ENCODE measurements at regions of chr2 and their contacts with region 1.

Region 1: GRCh38 chr2:38394903-38395341 is 17.8 kb upstream of the ATL2 start:
- DNase-seq: no peak
- ATAC-seq: no peak
- H3K4me3 ChIP-seq: no peak overlapping the region
- H3K27ac ChIP-seq: no peak overlapping the region
- H3K4me1 ChIP-seq: no peaks in the 10 kb centered on the region
- H3K27me3 ChIP-seq: no peaks in the 10 kb centered on the region

Region 2: DNA sequence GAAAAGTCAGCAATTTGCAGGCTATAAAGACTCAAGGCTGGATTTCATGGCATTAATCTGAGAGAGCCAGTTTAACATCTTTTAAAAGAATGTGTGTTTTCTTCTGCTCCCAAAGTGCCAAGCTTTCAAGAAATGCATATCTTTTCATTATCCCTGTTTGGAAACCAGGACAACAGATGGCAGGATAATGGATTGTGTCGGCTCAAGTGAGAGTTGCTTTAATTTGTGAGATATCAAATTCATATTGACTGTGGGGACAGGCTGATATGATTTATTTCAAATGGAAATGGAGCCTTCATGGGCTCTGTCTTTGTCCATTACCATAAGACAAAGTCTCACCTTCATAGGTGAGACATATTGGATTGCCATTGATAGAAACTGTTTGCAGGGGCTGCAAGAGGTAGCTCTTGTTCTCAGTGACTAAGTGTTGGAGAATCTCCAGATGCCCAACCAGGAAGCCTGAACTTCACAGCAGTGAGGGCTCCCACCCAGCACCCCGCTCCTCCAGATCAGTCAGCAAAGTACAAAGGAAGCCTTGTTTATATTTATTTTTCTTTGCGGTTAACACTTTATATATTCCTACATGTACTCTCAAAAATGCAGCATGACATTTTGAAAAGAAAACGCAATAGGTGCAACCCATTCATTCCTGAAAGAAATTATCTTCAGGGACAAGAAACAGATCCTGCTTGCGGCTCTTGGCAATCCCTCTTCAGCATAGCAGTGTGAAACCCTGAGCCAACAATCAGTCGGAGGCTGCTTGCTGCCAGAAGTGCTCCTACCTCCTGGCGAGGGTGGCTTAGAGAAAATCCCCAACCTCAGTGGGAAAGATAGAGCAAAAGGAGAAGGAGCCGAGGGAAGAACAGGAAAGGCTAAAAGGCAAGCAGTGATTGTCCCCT is 48.0 kb after region 1 on chr2:
- intact Hi-C with region 1: loop called in 1 of 2 experiments (anchors 10 kb)
- DNase-seq: no peak
- ATAC-seq: peak; percentile 24
- H3K4me3 ChIP-seq: no peak overlapping the region
- H3K27ac ChIP-seq: no peak overlapping the region
- H3K4me1 ChIP-seq: peaks cover 1 to 3% of the 10 kb centered on the region in 2 donors
- H3K27me3 ChIP-seq: peaks cover 0 to 1% of the 10 kb centered on the region in 2 donors